Common myeloid progenitor, CD34-positive (primary cell): ENCODE measurements at regions of chr1 and their contacts with region 1.

Region 1: GRCh38 chr1:33633019-33633801 is 160.8 kb downstream of the ZSCAN20 start:
- DNase-seq: peak; percentile 87 to 95 (median 92)
- H3K4me3 ChIP-seq: no peak overlapping the region
- H3K27ac ChIP-seq: no peak overlapping the region
- H3K4me1 ChIP-seq: peaks cover 0 to 3% (median 0%) of the 10 kb centered on the region in 4 experiments
- H3K27me3 ChIP-seq: peaks cover 0 to 21% (median 6%) of the 10 kb centered on the region in 5 experiments

Region 2: DNA sequence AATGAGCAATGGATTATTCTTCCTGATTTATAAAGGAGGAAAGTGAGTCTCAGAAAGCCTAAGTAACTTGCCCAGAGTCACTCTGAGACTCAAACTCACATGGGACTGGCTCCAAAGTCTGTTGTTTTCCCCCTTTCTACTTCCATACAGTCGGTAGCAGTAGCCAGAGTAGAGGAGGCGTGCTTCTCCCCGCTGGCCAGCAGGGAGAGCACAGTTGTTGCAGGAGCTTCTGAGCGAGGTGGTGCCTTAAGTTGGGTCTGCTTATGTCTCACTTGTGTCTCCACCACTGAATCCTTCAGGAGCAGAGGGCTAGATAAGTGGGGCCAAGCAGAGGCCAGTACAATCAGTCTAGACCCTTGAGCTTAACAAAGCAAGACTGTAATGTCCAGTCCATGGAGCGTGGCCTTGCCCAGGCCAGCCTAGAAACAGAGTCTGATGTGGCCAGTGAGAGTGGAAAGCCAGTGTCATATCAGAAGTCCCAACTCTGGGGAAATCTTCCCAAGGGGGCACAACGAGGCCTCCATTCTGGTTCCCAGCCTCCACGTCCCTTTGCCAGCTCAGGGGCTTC is 21.1 kb after region 1 on chr1:
- CTCF ChIA-PET with region 1: interaction called, 11 read pairs
- POLR2A ChIA-PET with region 1: no interaction called
- DNase-seq: peak; percentile 10 to 37 (median 30)
- H3K4me3 ChIP-seq: no peak overlapping the region
- H3K27ac ChIP-seq: no peak overlapping the region
- H3K4me1 ChIP-seq: no peaks in the 10 kb centered on the region
- H3K27me3 ChIP-seq: peaks cover 0 to 6% (median 0%) of the 10 kb centered on the region in 5 experiments

Region 3: GRCh38 chr1:33735621-33736020 is 102.4 kb after region 1 on chr1:
- CTCF ChIA-PET with region 1: no interaction called
- POLR2A ChIA-PET with region 1: no interaction called
- DNase-seq: peak in 2 of 3 donors; percentile 3 to 14
- H3K4me3 ChIP-seq: no peak overlapping the region
- H3K27ac ChIP-seq: no peak overlapping the region
- H3K4me1 ChIP-seq: no peaks in the 10 kb centered on the region
- H3K27me3 ChIP-seq: peaks cover 0 to 16% (median 0%) of the 10 kb centered on the region in 5 experiments